ENCODE measurements at regions of chr12 and their contacts with region 1.

Region 1: GRCh38 chr12:99005601-99006000 is 360.5 kb downstream of the APAF1 start:
- DNase-seq: no peak
- ATAC-seq: no peak

Region 2: DNA sequence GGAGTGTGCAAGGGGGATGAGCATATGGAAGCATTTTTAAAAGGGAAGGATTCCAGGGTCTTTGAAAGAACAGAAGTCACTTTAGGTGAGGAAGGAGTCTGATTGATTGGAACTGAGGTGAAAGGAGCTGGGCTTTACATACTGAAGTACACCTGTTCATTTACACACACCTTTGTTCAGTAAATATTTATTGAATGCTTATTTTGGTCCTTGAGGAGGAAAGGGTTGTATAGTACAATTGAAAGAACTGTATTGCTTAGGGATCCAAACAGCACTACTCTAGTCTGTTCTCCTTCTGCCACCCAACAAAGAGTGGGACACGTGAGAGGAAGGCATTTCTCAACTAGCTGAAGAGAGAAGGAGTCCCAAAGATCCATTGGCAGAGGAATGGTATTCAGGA is 296.6 kb before region 1 on chr12:
- intact Hi-C with region 1: loop called (anchors 5 kb)
- DNase-seq: no peak
- ATAC-seq: no peak

Region 3: DNA sequence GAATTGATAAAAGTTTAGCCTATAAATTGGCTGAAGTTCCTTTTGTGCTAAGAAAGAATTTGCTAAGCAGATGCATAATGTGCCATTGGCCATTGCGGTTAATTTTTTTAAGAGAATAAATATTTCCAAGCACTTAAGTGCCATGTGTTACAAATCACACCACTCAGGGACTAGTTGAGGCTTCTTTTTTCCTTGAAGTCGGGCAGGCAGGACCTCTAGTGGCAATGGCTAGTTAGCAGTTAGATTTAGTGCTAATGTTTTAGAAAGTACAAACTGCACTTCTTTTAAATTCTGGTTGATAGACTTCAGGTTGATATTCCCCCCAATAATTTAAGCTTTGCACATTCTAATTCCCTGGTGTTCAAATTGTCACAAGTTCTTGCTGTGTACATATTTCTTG is 66.3 kb before region 1 on chr12:
- intact Hi-C with region 1: no loop called
- DNase-seq: no peak
- ATAC-seq: no peak